ENCODE measurements at regions of chr1 and their contacts with region 1.

Region 1: GRCh38 chr1:163535807-163536206 is 214.1 kb downstream of the NUF2 start:
- DNase-seq: no peak
- ATAC-seq: peak in 1 of 4 donors; percentile 58
- H3K4me3 ChIP-seq: no peak overlapping the region
- H3K27ac ChIP-seq: no peak overlapping the region
- H3K4me1 ChIP-seq: peaks cover 0 to 5% (median 0%) of the 10 kb centered on the region in 12 donors
- H3K27me3 ChIP-seq: no peaks in the 10 kb centered on the region
- CTCF ChIP-seq: peak in 10 of 12 donors; percentile 11 to 43 (median 33)
- POLR2A ChIP-seq: no peak

Region 2: DNA sequence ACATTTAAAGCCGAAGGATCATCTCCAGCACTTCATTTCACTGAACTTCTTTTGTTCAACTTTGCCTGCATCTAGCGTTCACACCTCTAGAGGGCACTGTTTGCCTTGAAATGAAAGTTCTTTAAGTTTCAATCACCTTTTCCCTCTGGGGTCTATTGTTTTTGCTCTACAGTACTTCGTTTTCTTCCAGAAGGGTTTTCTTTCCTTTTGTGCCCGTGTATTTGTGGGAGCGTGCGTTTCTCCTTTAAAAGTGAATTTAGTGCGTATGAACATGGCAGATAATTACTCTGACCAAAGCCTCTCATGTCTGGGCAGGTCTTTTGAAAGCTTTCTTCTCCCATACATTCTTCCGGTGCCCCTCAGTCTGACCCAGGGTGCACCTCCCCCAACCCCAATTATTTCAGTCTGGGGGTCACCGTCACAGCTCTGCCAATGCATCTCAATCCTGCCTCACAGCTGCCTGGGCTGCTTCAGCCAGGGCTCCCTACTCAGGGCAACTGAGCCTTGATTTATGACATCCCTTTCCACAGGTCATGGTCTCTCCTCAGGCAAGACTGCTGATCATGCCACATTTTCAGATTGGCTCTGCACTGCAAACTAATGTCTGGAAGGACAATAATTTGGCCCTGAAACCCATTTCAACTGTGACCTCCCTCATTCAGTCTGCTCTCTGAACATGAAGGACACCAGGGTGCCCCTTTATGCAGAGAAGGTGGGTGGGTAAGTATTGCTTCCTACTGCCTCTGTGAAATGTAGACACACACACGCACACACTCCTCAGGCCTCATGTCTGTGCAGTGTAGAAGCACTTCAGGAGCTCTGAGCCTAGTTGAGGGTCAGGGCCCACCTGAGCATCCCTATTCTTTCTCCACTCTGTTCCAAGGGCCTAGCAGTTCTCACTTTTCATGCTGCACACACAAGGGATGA is 125.5 kb before region 1 on chr1:
- intact Hi-C with region 1: loop called in 2 of 10 experiments (anchors 10 kb)
- DNase-seq: no peak
- ATAC-seq: no peak
- H3K4me3 ChIP-seq: peak overlapping the region in 2 of 12 donors; percentile 8 to 20
- H3K27ac ChIP-seq: no peak overlapping the region
- H3K4me1 ChIP-seq: peaks cover 0 to 7% (median 0%) of the 10 kb centered on the region in 12 donors
- H3K27me3 ChIP-seq: peaks cover 0 to 4% (median 0%) of the 10 kb centered on the region in 9 donors
- CTCF ChIP-seq: peak; percentile 62 to 84 (median 72)
- POLR2A ChIP-seq: no peak

Region 3: DNA sequence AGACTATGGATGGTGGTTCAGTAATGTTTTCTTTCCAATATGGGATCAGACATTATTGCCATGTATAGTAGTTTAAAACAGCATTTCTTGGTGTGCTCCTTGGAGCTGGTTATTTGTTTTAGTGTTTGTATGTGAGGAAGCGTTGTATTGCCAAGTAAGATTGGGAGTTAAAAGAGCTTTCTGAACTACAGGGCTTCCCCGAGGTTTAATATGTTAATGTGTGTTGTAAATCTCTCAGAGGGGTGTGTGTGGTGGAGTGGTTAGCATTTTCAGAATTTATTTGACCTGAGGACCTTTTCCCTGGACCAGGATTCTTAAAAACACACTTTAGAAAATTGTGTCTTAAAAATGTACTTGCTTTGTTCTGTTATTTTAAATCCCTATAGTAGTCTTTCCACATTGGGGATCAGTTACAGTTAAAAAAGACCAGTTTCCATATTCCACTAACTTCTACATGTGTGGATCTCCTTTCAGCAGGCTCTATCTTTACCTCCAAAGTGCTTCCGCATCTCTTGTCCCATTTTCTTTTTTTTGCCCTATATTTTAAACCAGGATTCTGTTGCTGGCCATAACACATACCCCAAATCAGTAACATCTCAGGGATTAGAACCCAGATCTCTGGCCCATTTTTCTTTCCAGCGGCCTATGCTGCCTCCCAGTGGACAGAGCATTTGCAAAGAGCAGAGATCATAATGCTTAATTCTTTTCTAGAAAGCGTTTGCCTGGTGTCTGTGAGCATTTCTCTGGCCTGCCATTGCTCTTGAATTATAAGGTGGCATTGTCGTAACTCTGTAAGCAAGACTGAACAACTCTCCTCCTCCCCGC is 1081.8 kb after region 1 on chr1:
- intact Hi-C with region 1: loop called in 1 of 10 experiments (anchors 10 kb)
- DNase-seq: no peak
- ATAC-seq: no peak
- H3K4me3 ChIP-seq: no peak overlapping the region
- H3K27ac ChIP-seq: peak overlapping the region in 2 of 12 donors; percentile 35 to 73
- H3K4me1 ChIP-seq: peaks cover 4 to 91% (median 42%) of the 10 kb centered on the region in 12 donors
- H3K27me3 ChIP-seq: no peaks in the 10 kb centered on the region
- CTCF ChIP-seq: peak; percentile 18 to 58 (median 45)
- POLR2A ChIP-seq: no peak

Region 4: DNA sequence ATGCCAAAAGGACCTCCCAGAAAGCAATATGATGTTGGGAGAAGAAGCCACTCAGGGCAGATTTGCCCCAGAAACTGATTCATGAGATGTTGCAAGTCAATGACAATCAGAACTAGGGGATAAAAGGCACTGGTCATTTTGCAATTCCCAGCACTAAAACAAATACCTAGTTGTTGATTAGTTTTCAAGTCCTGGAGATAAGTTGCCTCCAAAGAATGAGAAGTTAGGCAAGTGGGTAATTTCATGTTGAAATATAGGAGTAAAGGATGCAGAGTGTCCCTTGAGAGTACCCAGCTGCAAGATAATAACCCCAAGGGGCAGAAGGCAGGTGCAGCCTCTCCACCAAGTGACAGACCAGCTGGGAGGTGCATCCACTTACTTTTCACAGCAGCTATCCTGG is 1386.8 kb after region 1 on chr1:
- intact Hi-C with region 1: loop called in 2 of 10 experiments (anchors 10 kb)
- DNase-seq: no peak
- ATAC-seq: peak in 1 of 4 donors; percentile 64
- H3K4me3 ChIP-seq: no peak overlapping the region
- H3K27ac ChIP-seq: no peak overlapping the region
- H3K4me1 ChIP-seq: peaks cover 0 to 14% (median 0%) of the 10 kb centered on the region in 12 donors
- H3K27me3 ChIP-seq: no peaks in the 10 kb centered on the region
- CTCF ChIP-seq: no peak
- POLR2A ChIP-seq: no peak

Measured in heart left ventricle (tissue), 16 donors.